ENCODE measurements at regions of chr10 and their contacts with region 1.

Region 1: DNA sequence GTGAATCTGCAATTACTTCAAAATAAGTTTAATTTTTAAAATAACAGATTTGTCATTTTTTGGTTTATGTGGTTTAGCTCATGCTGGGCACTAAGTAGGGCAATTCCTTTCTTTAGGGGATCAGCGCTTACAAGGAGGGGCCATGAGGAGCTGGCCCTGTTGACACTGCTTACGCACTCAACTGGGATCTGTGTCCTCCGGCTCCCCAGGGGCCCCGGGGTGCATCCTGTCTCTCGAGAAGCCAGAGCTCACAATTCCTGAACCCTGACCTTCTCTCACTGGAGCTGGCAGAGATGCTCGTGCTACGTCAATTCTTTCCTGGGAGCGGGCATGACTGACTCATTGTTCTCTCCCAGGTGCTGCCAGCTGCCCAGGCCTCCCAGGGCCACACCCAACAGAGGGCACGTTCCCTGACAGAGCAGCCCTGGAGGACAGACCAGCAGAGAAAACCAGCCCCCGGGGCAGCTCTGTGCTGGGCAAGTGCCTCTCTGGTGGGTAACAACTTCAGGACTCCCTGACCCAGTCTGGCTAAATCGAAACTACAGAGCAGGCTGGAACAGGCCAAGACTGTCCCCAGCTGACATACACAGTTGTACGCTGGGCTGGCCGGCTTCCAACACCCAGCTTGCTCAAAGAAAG is 36.8 kb downstream of the CTBP2 start:
- DNase-seq: peak; percentile 93
- ATAC-seq: peak; percentile 78

Region 2: DNA sequence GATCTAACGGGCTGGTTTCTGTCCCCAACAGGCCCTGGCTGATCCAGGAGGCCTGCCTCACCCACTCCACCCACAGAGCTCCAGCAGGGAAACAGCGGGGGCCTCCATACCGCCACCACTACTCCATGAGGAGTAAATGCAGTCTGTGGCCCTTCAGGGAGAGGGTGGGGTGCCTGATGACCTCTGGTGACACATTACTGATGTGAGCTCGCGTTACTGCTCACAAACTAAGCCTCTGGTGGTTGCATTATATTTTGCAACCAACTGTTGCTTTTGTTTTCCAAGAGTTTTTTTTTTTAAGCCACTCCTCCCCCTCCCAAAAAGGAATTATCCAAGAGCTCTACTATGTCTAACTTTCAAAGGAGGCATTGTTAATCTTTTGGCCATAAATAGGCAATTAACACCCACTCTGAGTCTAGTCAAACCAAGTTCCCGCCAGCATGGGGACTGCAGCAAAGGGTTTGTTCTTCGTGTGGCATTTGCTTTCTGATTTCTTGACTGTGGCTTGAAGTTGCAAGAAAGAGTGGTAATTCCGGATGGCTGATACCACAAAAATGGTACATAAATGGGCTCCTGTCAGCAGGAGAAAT is 452.0 kb before region 1 on chr10:
- intact Hi-C with region 1: no loop called
- DNase-seq: peak; percentile 84
- ATAC-seq: peak; percentile 72

Region 3: DNA sequence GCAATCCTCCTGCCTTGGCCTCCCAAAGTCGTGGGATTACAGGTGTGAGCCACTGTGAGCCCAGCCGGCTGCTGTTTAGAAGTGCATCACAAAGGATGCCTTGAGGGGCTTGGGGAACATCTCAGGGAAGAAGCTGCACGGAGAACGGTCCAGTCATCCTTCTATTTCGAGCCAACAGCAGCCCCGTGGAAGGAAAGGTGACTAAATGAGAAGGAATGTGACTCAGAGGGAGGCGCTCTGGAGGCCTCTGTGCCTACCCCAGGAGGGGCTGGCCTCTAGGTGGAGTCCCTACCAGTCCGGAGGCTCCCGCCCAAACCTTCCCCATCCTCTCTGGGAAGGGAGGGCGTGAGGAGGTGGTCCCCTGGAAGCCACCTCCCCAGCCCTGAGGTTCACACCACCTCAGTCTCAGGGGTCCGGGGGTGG is 39.4 kb before region 1 on chr10:
- intact Hi-C with region 1: loop called (anchors 5 kb)
- DNase-seq: no peak
- ATAC-seq: peak; percentile 22

Region 4: DNA sequence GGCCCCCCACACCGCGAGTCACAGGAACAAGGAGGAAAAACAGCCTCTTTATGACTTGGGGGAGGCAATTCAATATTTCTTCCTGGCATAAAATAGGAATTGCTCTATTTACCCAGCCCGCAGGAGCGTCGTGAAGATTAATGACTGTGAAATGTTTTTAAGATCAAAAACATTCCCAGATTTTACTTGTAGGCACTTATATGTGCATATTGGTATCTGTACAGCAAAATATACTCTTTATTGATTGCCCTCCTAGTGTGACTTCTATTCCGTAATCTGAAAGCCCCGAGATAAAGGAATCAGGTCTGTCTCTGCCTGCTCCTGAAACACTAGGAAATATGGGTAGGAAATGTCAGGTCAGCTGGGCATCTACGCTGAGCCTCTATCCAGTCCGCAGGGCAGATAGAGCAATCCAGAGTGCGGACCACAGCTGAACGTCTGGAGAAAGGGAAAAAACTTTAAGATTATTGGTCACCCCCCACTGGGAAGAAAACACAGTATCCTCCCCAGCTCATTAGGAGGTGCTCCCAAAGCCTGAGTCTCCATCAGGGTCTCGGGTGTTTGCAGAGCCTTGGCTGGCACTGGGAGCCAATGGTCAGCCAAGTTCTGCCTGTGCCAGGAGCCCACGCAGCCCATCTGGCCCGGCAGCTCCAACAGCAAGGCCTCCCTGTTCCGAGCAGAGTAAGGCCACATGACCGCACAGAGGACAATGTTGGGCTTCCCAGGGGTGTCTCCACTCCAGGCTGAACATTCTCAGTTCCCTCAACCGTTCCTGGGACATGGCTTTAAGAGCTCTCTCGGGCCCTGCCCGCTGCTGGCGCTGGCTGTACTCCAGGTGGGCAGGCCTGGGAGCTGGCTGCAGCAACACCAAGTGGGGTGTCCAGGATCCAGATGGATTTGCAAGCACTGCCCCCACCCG is 29.1 kb after region 1 on chr10:
- intact Hi-C with region 1: loop called (anchors 2 kb)
- DNase-seq: peak; percentile 75
- ATAC-seq: peak; percentile 83

Measured in Right ventricle myocardium inferior (tissue), 1 donor.